Brain microvascular endothelial cell (primary cell): ENCODE measurements at regions of chr3 and their contacts with region 1.

Region 1: DNA sequence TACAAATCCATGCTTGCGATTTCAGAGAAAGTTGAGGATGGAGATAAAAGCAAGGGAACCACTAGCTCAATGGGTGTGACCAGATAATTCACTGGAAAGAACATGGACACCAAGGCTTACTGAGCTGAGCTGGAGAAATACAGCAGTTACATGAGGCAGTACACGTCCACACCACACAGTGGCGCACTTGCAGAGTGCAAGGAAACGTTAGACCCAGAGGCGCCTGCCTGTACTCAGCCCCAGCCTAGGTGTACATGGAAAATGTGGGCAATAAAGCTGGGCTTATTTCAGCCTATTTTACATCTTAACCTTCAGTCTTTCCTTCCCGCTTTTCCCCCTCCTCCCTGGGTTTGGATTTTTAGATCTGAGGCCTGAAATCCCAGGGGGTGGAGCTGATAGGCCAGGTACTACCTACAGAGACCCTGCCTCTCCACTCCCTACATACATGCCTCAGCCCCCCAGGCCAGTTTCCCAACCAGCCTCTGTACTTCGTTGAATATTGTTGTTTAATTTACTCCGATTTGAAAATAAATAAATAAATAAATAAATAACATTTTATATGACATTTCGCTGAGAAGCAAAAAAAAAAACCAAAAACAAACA is 60.1 kb downstream of the PCOLCE2 start:
- DNase-seq: peak; percentile 84
- H3K4me3 ChIP-seq: no peak overlapping the region
- H3K27ac ChIP-seq: no peak overlapping the region
- H3K27me3 ChIP-seq: no peaks in the 10 kb centered on the region
- CTCF ChIP-seq: peak; percentile 95

Region 2: GRCh38 chr3:142963516-142964448 is 135.0 kb after region 1 on chr3 and contains the start of gene PAQR9:
- in situ Hi-C with region 1: loop called (anchors 25 kb)
- DNase-seq: no peak
- H3K4me3 ChIP-seq: peak within 1 kb of the TSS; percentile 56
- H3K27ac ChIP-seq: no peak within 1 kb of the TSS
- H3K27me3 ChIP-seq: peaks cover 16% of the 10 kb centered on the region
- CTCF ChIP-seq: no peak

Region 3: GRCh38 chr3:143010024-143010423 is 181.2 kb after region 1 on chr3:
- in situ Hi-C with region 1: no loop called
- DNase-seq: no peak
- H3K4me3 ChIP-seq: no peak overlapping the region
- H3K27ac ChIP-seq: no peak overlapping the region
- H3K27me3 ChIP-seq: no peaks in the 10 kb centered on the region
- CTCF ChIP-seq: no peak

Region 4: GRCh38 chr3:143035466-143036211 is 206.8 kb after region 1 on chr3:
- in situ Hi-C with region 1: no loop called
- DNase-seq: no peak
- H3K4me3 ChIP-seq: no peak overlapping the region
- H3K27ac ChIP-seq: peak overlapping the region; percentile 58
- H3K27me3 ChIP-seq: no peaks in the 10 kb centered on the region
- CTCF ChIP-seq: no peak

Region 5: DNA sequence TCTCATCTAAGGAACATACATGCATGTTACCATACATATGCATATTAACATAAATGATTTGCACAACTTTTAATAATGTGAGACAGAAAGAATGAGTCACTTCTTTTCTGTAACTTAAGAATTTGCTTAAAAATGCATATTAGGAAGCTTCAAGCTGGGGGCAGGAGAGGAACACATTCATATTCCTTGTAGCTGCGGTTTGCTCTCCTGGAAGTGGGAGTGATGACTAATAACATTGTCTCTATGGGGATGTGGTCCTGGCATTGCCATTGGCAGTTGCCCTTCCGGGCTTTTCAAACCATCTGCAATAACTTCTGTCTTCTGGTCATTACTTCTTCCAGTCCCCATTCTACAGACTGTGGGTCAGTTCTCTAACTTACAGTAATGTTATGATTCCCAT is 306.3 kb after region 1 on chr3:
- in situ Hi-C with region 1: no loop called
- DNase-seq: peak; percentile 94
- H3K4me3 ChIP-seq: no peak overlapping the region
- H3K27ac ChIP-seq: peak overlapping the region; percentile 16
- H3K27me3 ChIP-seq: no peaks in the 10 kb centered on the region
- CTCF ChIP-seq: peak; percentile 28